Pancreas (tissue), 10 donors: ENCODE measurements at regions of chr6 and their contacts with region 1.

Region 1: DNA sequence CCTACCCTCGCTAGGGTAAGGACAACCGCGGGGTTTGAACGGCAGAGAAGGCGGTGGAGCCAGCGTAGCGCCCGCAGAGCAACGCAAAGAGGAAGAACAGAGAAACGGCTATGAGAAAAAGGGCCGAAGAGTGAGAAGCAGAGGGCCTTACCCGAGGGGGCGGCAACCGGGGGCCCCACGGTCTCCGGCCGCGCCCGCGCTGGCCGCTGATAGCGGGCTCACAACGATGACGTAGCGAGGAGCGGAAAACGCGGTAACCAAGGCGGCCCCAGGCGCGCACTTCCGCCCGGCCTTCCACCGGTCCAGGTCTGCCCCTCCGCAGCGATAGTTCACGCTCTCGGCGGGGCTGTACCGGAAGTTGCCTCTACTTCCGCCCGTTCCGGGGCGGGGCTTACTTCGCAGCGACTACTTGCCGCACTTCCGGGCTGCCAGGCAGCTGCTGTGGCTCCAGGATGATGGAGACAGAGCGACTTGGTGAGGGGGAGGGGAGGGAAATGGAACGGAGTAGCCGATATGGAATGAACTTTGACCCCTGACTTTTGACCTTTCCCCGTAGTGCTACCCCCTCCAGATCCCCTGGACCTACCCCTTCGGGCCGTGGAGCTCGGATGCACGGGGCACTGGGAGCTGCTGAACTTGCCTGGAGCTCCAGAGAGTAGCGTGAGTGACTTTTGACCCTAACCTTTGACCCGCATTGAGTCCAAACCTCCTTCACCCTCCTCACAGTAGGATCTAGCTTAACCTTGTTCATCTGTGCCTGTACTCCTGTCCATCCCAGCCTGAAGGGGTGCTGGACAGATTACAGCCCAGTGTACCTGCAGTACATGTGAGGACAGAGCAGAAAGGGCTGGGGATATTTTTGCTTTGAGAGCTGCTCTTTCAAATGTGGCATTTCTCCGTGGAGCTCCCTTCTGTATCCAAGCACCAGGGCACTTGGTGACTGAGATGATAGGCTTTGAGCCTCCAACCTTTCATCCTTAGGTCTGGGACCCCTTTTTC is at the starts of genes NELFE and SKIC2:
- DNase-seq: peak; percentile 97 to 100 (median 98)
- ATAC-seq: peak; percentile 99 to 100 (median 99)
- H3K4me3 ChIP-seq: peak within 1 kb of the TSS; percentile 79 to 97 (median 92)
- H3K27ac ChIP-seq: peak within 1 kb of the TSS; percentile 66 to 74 (median 68)
- H3K4me1 ChIP-seq: peaks cover 0 to 14% (median 6%) of the 10 kb centered on the region in 3 donors
- H3K27me3 ChIP-seq: no peaks in the 10 kb centered on the region
- CTCF ChIP-seq: no peak
- total RNA-seq, gene NELFE: 22.5 to 40.8 (median 28.2) TPM
- total RNA-seq, gene SKIC2: 21.4 to 46.3 (median 25.6) TPM

Region 2: DNA sequence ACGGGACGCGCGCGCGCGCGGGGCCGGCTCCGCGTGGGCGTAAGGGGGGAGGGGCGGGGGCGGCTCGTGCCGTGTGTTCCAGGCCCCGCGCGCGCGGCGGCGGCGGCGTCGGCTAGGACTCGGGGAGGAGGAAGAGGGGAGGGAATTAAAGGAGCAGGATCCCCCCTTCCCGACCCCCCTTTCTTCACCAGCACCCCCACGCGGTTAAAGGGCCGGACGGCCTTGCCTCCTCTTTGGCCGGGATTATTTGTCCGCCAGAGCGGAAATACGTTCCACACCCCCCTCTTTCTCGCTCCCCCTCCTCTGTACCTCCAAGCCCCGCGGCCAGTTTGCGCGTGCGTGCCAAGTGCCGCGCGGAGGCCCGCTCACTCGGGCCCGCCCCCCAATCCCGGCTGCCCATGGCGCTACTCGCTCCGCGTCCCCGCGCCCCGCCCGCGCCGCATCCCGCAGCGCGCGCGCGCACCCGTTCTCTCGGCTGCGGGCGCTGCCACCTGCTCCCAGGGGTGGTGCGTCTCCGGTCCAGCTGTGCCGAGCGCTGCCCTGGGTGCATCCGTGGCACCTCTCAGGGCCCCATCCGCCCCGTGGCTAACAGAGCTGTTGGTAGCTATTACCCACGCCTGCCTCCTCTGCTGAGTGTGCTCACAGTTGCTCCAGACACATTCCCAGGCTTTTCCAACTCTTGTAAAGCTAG is 56.9 kb before region 1 on chr6 and contains the start of gene ZBTB12:
- intact Hi-C with region 1: loop called in 2 of 3 experiments (anchors 10 kb)
- DNase-seq: peak; percentile 92 to 96 (median 94)
- ATAC-seq: peak; percentile 71 to 87 (median 78)
- H3K4me3 ChIP-seq: peak within 1 kb of the TSS; percentile 39 to 67 (median 55)
- H3K27ac ChIP-seq: peak within 1 kb of the TSS; percentile 63 to 86 (median 68)
- H3K4me1 ChIP-seq: peaks cover 4 to 11% (median 5%) of the 10 kb centered on the region in 3 donors
- H3K27me3 ChIP-seq: no peaks in the 10 kb centered on the region
- CTCF ChIP-seq: no peak
- total RNA-seq, gene ZBTB12: 0.60 to 4.5 (median 1.9) TPM

Region 3: DNA sequence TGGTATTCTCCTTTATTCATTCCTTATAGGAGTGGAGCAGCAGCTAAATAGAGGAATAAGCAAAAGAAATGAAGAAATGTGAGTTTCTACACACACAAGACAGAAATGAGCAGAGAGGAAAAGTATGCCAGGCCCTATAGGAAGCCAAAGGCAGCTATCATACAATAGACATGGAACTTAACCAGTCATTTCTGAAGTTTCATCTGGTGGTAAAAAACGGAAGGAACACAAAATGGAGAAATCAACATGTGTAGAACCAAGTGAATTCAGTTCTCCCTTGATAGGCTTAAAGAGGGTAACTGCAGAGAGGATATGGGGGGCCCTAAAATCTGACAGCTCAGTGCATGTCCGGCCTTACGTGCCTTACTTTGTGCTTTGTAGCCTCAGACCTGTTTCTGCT is 368.1 kb after region 1 on chr6:
- intact Hi-C with region 1: no loop called
- DNase-seq: no peak
- ATAC-seq: no peak
- H3K4me3 ChIP-seq: no peak overlapping the region
- H3K27ac ChIP-seq: no peak overlapping the region
- H3K4me1 ChIP-seq: no peaks in the 10 kb centered on the region
- H3K27me3 ChIP-seq: no peaks in the 10 kb centered on the region
- CTCF ChIP-seq: no peak